Common myeloid progenitor, CD34-positive (primary cell): ENCODE measurements at regions of chr9 and their contacts with region 1.

Region 1: GRCh38 chr9:97598461-97599288 is 34.5 kb downstream of the TSTD2 start:
- DNase-seq: peak; percentile 83 to 92 (median 87)
- H3K4me3 ChIP-seq: peak overlapping the region in 1 of 7 experiments; percentile 32
- H3K27ac ChIP-seq: no peak overlapping the region
- H3K4me1 ChIP-seq: peaks cover 0 to 7% (median 2%) of the 10 kb centered on the region in 4 experiments
- H3K27me3 ChIP-seq: no peaks in the 10 kb centered on the region

Region 2: GRCh38 chr9:96856363-96857286 is 742.0 kb before region 1 on chr9:
- CTCF ChIA-PET with region 1: interaction called, 10 read pairs
- POLR2A ChIA-PET with region 1: no interaction called
- DNase-seq: peak; percentile 64 to 84 (median 80)
- H3K4me3 ChIP-seq: no peak overlapping the region
- H3K27ac ChIP-seq: no peak overlapping the region
- H3K4me1 ChIP-seq: peaks cover 4 to 18% (median 17%) of the 10 kb centered on the region in 4 experiments
- H3K27me3 ChIP-seq: peaks cover 0 to 12% (median 0%) of the 10 kb centered on the region in 5 experiments

Region 3: GRCh38 chr9:97478301-97478981 is 120.2 kb before region 1 on chr9:
- CTCF ChIA-PET with region 1: interaction called, 637 read pairs
- POLR2A ChIA-PET with region 1: no interaction called
- DNase-seq: peak in 2 of 3 donors; percentile 24 to 36
- H3K4me3 ChIP-seq: no peak overlapping the region
- H3K27ac ChIP-seq: no peak overlapping the region
- H3K4me1 ChIP-seq: no peaks in the 10 kb centered on the region
- H3K27me3 ChIP-seq: no peaks in the 10 kb centered on the region

Region 4: GRCh38 chr9:97501177-97501971 is 97.3 kb before region 1 on chr9 and contains the start of gene TMOD1:
- CTCF ChIA-PET with region 1: interaction called, 29 read pairs
- POLR2A ChIA-PET with region 1: interaction called, 3 read pairs
- DNase-seq: peak; percentile 51 to 72 (median 55)
- H3K4me3 ChIP-seq: peak within 1 kb of the TSS; percentile 58 to 78 (median 67)
- H3K27ac ChIP-seq: peak within 1 kb of the TSS in 1 of 2 experiments; percentile 71
- H3K4me1 ChIP-seq: peaks cover 0 to 20% (median 18%) of the 10 kb centered on the region in 4 experiments
- H3K27me3 ChIP-seq: peaks cover 8 to 53% (median 31%) of the 10 kb centered on the region in 5 experiments

Region 5: DNA sequence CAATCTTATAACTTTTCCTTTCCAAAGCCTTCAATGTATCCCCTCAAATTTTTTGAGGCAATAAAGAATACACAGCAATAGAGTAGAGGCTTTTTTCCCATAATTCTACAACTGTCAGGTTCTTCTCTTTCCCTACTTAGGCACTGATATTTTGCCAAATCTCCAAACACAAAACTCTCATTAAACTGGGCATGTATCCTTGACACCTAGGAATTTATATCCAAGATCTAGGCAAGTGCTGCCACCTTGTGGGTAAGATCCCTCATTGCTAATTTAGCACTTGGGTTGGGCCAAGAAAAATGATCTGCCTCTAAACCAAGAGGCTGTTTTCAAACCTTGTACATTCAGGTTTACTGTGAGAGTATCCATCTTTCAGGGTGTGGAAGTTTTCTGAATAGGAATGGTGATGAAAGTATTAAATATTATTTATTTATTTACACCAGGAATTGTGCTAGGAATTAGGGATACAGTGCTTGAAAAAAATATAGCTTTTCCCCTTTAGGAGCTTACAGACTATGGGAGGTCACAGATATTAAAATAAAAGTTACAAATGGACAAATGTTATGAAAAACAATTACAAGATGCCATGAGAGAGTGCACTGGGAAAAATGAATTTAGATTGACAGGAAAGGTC is 16.9 kb after region 1 on chr9:
- CTCF ChIA-PET with region 1: interaction called, 63 read pairs
- POLR2A ChIA-PET with region 1: no interaction called
- DNase-seq: peak; percentile 63 to 83 (median 75)
- H3K4me3 ChIP-seq: no peak overlapping the region
- H3K27ac ChIP-seq: no peak overlapping the region
- H3K4me1 ChIP-seq: no peaks in the 10 kb centered on the region
- H3K27me3 ChIP-seq: no peaks in the 10 kb centered on the region